ENCODE measurements at regions of chr1 and their contacts with region 1.

Region 1: GRCh38 chr1:3649342-3650247 is at the start of gene WRAP73:
- DNase-seq: peak; percentile 91
- H3K4me3 ChIP-seq: peak within 1 kb of the TSS; percentile 79 to 94 (median 86)
- H3K27ac ChIP-seq: no peak within 1 kb of the TSS
- H3K4me1 ChIP-seq: peaks cover 8% of the 10 kb centered on the region
- H3K27me3 ChIP-seq: peaks cover 24 to 41% of the 10 kb centered on the region in 2 experiments
- CTCF ChIP-seq: peak; percentile 14 to 38
- POLR2A ChIP-seq: peak; percentile 81
- total RNA-seq, gene WRAP73: 23.0 and 27.7 TPM in 2 replicates

Region 2: DNA sequence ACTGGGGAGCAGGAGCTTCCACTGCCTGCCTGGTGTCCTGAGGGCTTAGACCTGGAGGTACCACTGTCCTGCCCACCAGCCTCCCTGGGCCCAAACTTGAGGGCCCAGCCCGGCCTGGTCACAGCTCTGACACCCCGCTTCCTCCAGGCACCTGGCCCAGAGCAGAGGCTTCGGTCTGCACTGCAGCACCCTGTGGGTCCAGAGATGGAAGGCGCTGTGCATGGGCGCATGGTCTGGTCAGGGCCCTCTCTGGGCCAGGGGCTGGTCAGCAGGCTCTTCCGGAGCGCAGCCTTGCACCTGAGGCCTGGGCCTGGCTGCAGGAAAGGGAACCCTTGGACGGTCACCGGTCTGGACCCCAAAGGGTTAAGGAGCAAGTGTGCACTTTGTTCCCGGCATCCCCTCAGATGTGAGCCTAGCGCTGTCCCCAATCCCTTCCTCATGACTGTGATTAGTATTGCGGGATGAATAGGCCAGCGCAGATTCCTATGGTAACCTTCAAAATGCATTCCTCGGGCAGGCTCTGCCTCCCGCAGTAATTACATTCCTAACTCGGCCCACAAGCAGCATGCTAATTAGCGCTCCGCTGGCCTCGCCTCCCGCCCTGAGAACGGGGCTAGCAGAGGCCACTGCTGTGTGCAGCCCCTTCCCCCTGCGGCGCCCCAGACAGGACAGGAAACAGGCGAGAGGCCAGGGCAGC is 544.3 kb before region 1 on chr1:
- CTCF ChIA-PET with region 1: no interaction called
- POLR2A ChIA-PET with region 1: no interaction called
- dilution Hi-C with region 1: no loop called
- intact Hi-C with region 1: no loop called
- DNase-seq: no peak
- H3K4me3 ChIP-seq: no peak overlapping the region
- H3K27ac ChIP-seq: no peak overlapping the region
- H3K4me1 ChIP-seq: no peaks in the 10 kb centered on the region
- H3K27me3 ChIP-seq: no peaks in the 10 kb centered on the region
- CTCF ChIP-seq: no peak
- POLR2A ChIP-seq: no peak

Region 3: GRCh38 chr1:3586932-3587678 is 62.5 kb before region 1 on chr1:
- CTCF ChIA-PET with region 1: no interaction called
- POLR2A ChIA-PET with region 1: no interaction called
- dilution Hi-C with region 1: no loop called
- intact Hi-C with region 1: loop called (anchors 2 kb)
- DNase-seq: no peak
- H3K4me3 ChIP-seq: no peak overlapping the region
- H3K27ac ChIP-seq: no peak overlapping the region
- H3K4me1 ChIP-seq: peaks cover 14% of the 10 kb centered on the region
- H3K27me3 ChIP-seq: no peaks in the 10 kb centered on the region
- CTCF ChIP-seq: no peak
- POLR2A ChIP-seq: no peak

Region 4: GRCh38 chr1:3624200-3625136 is 25.1 kb before region 1 on chr1 and contains the start of gene TPRG1L:
- CTCF ChIA-PET with region 1: no interaction called
- POLR2A ChIA-PET with region 1: no interaction called
- dilution Hi-C with region 1: no loop called
- intact Hi-C with region 1: loop called (anchors 1 kb)
- DNase-seq: peak; percentile 97
- H3K4me3 ChIP-seq: peak within 1 kb of the TSS; percentile 53 to 60 (median 54)
- H3K27ac ChIP-seq: peak within 1 kb of the TSS; percentile 25
- H3K4me1 ChIP-seq: peaks cover 13% of the 10 kb centered on the region
- H3K27me3 ChIP-seq: no peaks in the 10 kb centered on the region
- CTCF ChIP-seq: no peak
- POLR2A ChIP-seq: peak; percentile 3
- total RNA-seq, gene TPRG1L: 46.2 and 53.8 TPM in 2 replicates

Measured in endothelial cell of umbilical vein (primary cell).